ENCODE measurements at regions of chr11 and their contacts with region 1.

Region 1: DNA sequence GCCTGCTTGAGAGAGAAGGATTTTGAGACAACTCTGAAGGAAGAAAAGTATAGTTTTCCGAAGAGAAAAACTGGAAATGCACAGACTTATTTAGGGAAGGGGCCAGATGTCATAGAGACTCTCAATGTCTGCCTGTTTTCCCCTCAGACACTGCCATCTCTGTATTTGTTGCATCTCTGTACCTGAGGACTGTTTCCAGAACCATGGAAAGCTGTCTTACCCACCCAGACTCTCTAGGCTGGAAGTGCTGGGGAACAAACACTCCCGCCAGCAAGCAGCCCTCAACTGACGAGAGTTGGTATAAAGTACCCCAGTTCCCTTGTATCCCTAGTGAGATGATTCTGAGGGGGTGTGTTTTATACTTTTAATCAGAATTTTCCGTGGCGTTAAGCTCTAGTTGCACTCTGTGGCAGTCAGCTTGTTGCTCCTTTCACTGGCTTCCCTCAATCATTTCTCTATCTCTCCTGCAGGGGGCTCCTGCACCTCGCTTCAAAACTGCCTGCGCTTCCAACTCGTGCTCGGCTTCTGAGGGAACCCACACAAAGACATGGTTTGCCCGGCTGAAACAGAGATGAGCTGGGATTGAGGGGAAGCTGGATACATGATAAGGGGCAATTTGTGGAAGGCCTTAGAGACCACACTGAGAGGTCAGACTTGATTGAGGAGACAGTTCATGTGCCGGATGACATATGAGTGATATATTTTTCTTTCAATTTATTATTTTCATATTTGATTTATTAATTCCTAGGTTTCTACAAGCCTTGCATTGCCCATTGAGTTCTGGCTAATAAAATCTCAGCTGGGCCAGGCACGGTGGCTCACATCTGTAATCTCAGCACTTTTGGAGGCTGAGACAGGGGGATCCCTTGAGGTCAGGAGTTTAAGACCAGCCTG is 36.9 kb upstream of the CLPB start:
- DNase-seq: peak; percentile 72
- ATAC-seq: peak; percentile 88
- H3K4me3 Mint-ChIP-seq: peak overlapping the region; percentile 24
- H3K27ac Mint-ChIP-seq: no peak overlapping the region
- H3K4me1 Mint-ChIP-seq: peaks cover 7% of the 10 kb centered on the region
- H3K27me3 Mint-ChIP-seq: peaks cover 58% of the 10 kb centered on the region

Region 2: GRCh38 chr11:72418834-72419562 is 52.3 kb before region 1 on chr11:
- CTCF ChIA-PET with region 1: no interaction called
- DNase-seq: no peak
- ATAC-seq: peak; percentile 54
- H3K4me3 Mint-ChIP-seq: no peak overlapping the region
- H3K27ac Mint-ChIP-seq: peak overlapping the region; percentile 82
- H3K4me1 Mint-ChIP-seq: peaks cover 34% of the 10 kb centered on the region
- H3K27me3 Mint-ChIP-seq: no peaks in the 10 kb centered on the region

Region 3: DNA sequence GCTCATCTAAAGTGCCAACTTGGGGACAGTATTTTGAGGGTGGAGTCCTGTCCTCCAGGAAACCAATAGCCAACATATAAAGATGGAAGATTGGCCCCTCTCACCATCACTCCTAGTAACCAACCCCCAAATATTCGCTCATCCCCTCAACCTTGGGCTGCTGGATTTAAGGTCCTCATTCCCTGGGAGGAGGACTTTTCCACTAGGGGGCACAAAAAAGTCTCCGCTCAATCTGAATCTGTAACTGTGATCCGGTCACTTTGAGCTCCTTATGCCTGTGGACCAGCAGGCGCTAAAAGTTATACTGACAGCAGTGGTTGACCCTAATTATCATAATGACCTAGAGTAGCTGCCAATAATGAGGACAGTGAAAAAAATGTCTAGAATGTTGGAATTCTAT is 16.5 kb before region 1 on chr11:
- CTCF ChIA-PET with region 1: interaction called, 13 read pairs
- DNase-seq: no peak
- ATAC-seq: no peak
- H3K4me3 Mint-ChIP-seq: no peak overlapping the region
- H3K27ac Mint-ChIP-seq: no peak overlapping the region
- H3K4me1 Mint-ChIP-seq: peaks cover 1% of the 10 kb centered on the region
- H3K27me3 Mint-ChIP-seq: peaks cover 9% of the 10 kb centered on the region

Region 4: GRCh38 chr11:72519220-72519881 is 48.1 kb after region 1 on chr11:
- CTCF ChIA-PET with region 1: interaction called, 12 read pairs
- DNase-seq: peak; percentile 56
- ATAC-seq: peak; percentile 70
- H3K4me3 Mint-ChIP-seq: peak overlapping the region; percentile 67
- H3K27ac Mint-ChIP-seq: peak overlapping the region; percentile 93
- H3K4me1 Mint-ChIP-seq: peaks cover 24% of the 10 kb centered on the region
- H3K27me3 Mint-ChIP-seq: peaks cover 4% of the 10 kb centered on the region

Region 5: DNA sequence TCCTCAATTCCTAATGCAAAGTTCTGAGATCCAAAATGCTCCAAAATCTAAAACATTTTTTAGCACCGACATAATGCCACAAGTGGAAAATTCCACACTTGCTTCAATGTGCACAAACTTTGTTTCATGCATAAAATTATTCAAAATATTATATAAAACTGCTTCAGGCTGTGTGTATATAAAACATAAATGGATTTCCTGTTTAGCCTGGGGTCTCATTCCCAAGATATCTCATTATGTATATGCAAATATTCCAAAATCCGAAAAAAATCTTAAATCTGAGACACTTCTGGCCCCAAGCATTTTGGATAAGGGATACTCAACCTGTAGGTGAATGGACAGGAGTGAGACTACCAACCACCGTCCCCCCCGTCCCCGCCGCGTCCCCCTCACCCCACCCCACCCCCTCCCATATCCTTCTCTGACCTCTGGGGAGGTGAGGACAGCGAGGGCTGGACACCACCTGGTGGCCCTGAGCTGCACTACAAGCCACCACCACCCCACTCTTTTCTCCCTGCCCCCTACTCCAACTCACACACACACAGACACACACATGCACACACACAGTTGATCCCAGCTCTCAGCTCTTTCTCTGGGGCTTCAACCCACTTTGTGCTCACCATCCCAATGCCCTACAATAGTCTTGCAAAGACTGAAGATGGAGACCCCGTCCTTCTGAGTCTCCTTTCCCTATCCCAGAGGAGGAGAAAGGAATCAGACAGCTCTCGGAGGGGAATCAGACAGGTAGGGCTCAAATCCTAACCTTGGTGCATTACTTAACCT is 102.0 kb after region 1 on chr11:
- CTCF ChIA-PET with region 1: interaction called, 28 read pairs
- DNase-seq: peak; percentile 52
- ATAC-seq: peak; percentile 77
- H3K4me3 Mint-ChIP-seq: no peak overlapping the region
- H3K27ac Mint-ChIP-seq: no peak overlapping the region
- H3K4me1 Mint-ChIP-seq: peaks cover 22% of the 10 kb centered on the region
- H3K27me3 Mint-ChIP-seq: peaks cover 10% of the 10 kb centered on the region

Region 6: GRCh38 chr11:72661486-72661885 is 190.2 kb after region 1 on chr11:
- CTCF ChIA-PET with region 1: no interaction called
- DNase-seq: no peak
- ATAC-seq: no peak
- H3K4me3 Mint-ChIP-seq: no peak overlapping the region
- H3K27ac Mint-ChIP-seq: no peak overlapping the region
- H3K4me1 Mint-ChIP-seq: no peaks in the 10 kb centered on the region
- H3K27me3 Mint-ChIP-seq: peaks cover 41% of the 10 kb centered on the region

Region 7: DNA sequence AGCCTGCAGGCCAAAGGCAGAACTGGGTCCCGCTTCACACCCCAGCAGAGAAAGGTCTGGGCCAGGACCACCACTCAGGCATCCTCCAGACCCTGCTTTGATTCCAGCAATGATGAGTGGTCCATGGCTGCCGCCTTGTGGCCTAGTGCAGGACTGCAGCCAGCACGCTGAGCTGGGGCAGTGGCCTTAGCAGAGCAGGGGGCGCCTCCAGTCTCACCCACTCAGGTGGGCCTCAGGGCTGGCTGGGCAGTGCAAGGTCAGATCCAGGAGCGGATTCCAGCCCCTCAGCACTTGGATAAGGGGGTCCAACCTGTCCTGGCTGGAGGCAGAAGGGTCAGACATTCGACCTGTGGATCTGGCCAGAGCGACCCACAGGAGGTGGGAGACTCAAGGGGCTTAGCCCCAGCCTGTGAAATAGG is 212.5 kb after region 1 on chr11:
- CTCF ChIA-PET with region 1: interaction called, 12 read pairs
- DNase-seq: peak; percentile 78
- ATAC-seq: peak; percentile 70
- H3K4me3 Mint-ChIP-seq: no peak overlapping the region
- H3K27ac Mint-ChIP-seq: no peak overlapping the region
- H3K4me1 Mint-ChIP-seq: peaks cover 45% of the 10 kb centered on the region
- H3K27me3 Mint-ChIP-seq: peaks cover 11% of the 10 kb centered on the region